Posterior vena cava (tissue), 2 donors: ENCODE measurements at regions of chr11 and their contacts with region 1.

Region 1: GRCh38 chr11:42344204-42344792 is 884.8 kb upstream of the LRRC4C start:
- DNase-seq: no peak

Region 2: DNA sequence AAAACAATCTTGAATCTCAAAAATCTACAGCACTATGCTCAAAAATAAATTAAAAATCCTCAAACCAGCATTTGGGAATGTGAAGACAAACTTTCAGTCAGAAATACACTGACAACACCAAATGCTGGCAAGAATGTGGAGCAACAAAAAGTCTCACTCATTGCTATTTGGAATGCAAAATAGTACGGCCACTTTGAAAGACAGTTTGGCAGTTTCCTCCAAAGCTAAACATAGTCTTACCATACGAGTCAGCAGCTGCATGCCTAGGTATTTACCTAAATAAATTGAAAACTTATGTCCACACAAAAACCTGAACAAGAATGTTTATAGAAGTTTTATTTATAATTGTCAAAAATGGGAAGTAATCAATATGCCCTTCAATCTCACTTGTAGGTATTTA is 19.4 kb after region 1 on chr11:
- intact Hi-C with region 1: loop called in 1 of 2 experiments (anchors 1 kb)
- DNase-seq: no peak

Region 3: DNA sequence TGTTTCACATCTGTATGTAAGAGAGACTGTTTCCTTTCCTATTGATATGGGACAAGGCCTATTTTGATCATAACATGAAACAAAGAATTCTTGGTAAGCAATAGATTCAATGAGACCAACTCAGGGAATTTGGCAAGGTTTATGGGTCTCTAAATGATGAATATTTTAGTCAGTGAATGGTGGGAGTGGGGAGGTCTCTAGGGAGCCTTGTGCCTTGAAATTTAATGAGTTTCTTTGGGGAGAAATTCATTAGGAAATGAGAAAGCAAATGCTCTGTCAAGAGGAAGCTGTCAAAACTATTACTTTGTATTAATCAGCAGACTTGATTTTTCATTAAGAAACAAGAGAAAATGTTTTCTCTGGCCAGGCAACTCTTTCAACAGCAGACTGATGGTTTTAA is 45.8 kb after region 1 on chr11:
- intact Hi-C with region 1: no loop called
- DNase-seq: no peak